ENCODE measurements at regions of chr2 and their contacts with region 1.

Region 1: DNA sequence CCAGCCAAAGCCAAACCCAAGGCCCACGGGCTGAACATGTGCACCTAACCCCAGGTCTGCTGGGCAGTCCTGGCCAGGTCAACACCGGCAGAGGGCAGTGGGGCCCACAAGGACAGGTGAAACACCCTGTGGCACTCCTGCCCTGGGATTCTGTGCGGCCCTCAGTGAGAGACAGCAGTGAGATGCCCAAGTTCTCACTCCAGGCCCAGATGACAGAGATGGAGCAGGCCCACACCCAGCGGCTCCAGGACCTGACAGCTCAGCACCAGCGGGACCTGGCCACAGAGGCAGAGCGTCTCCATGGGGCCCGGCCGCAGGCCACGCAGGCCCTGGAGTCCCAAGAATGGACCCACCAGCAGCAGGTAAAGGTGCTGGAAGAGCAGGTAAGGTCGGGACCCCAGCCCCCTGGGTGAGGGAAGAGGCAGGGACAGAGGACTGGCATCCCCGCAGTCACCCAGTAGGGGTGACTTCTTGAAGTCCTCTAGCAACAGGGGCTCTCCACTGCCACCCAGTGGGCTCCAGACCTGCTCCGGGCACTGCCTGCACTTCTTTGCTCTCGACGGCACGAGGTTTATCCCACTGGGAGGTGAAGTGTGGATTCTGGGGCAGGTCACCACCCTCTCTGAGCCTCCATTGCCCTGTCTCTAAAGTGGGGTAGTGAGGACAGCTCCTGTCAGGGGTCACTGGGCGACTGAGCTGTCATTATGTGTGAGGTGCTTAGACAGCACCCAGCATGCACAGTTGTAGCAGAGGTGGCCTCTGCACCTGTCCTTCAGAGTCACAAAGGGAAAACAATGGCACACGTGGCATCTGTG is 8.8 kb upstream of the SNED1 start:
- DNase-seq: peak; percentile 46 to 83
- ATAC-seq: peak in 3 of 4 donors; percentile 20 to 46 (median 34)
- H3K4me3 ChIP-seq: no peak overlapping the region
- H3K27ac ChIP-seq: no peak overlapping the region
- H3K4me1 ChIP-seq: peaks cover 32% of the 10 kb centered on the region
- H3K27me3 ChIP-seq: no peaks in the 10 kb centered on the region
- CTCF ChIP-seq: peak; percentile 47

Region 2: DNA sequence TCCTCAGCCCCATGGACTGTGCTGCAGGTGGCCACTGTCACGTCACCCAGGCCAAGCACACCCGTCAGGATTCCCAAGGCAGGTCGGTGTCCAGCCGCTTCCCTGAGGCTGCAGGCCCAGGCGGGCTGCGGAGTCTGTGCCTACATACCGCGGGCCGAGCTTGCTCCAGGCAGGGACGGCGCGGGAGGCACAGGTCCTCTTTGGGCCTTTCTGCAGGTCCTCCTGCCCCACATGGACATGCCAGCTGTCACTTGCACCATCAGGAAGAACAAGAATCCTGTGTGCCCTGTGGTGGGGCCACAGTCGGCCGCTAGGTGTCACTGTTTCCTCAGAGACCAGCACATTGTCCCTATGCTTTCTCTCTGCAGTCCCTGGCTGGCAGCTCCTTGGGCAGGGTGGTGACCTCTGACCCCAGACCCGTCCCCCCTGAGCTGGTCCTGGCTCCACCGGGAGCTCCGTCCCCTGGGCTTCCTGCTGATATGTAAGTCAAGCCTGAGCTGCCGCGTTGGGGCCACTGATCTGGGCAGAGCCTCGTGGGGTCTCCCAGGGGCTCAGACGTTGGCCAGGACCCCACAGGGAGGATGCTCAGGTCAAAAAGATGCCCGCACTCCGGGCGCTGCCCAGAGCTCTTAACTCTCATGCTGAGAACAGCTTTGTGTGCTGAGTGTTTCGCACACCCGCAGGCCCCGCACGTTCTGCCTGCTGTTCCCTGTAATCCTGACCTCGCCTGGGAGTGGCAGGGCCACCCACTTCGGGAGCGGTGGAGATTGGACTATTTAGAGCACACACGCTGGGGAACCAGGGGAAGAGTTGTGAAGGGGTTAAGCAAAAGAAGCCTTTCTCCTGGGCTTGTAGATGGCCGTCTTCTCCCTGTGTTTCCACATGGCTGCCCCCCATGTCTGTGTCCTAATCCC is 138.3 kb before region 1 on chr2:
- intact Hi-C with region 1: loop called (anchors 2 to 5 kb)
- DNase-seq: peak; percentile 87 to 91
- ATAC-seq: peak; percentile 96 to 100 (median 98)
- H3K4me3 ChIP-seq: no peak overlapping the region
- H3K27ac ChIP-seq: no peak overlapping the region
- H3K4me1 ChIP-seq: no peaks in the 10 kb centered on the region
- H3K27me3 ChIP-seq: no peaks in the 10 kb centered on the region
- CTCF ChIP-seq: peak; percentile 95

Region 3: GRCh38 chr2:240913810-240914644 is 75.6 kb before region 1 on chr2:
- intact Hi-C with region 1: loop called in 1 of 2 experiments (anchors 5 kb)
- DNase-seq: peak; percentile 80 to 86
- ATAC-seq: peak; percentile 53 to 81 (median 64)
- H3K4me3 ChIP-seq: no peak overlapping the region
- H3K27ac ChIP-seq: no peak overlapping the region
- H3K4me1 ChIP-seq: peaks cover 8% of the 10 kb centered on the region
- H3K27me3 ChIP-seq: peaks cover 0 to 17% (median 6%) of the 10 kb centered on the region in 3 donors
- CTCF ChIP-seq: peak; percentile 78

Region 4: GRCh38 chr2:240926516-240927389 is 62.9 kb before region 1 on chr2:
- intact Hi-C with region 1: loop called in 1 of 2 experiments (anchors 5 kb)
- DNase-seq: peak; percentile 23 to 68
- ATAC-seq: peak in 3 of 4 donors; percentile 78 to 88 (median 82)
- H3K4me3 ChIP-seq: no peak overlapping the region
- H3K27ac ChIP-seq: no peak overlapping the region
- H3K4me1 ChIP-seq: no peaks in the 10 kb centered on the region
- H3K27me3 ChIP-seq: peaks cover 0 to 10% (median 0%) of the 10 kb centered on the region in 3 donors
- CTCF ChIP-seq: no peak